CD4-positive, alpha-beta memory T cell (primary cell): ENCODE measurements at regions of chr5 and their contacts with region 1.

Region 1: GRCh38 chr5:142769741-142770631 is at the start of gene ARHGAP26:
- DNase-seq: peak; percentile 87 to 91 (median 88)
- H3K4me3 ChIP-seq: peak within 1 kb of the TSS; percentile 74 to 89
- H3K4me3 Mint-ChIP-seq: peak within 1 kb of the TSS; percentile 94 to 98 (median 96)
- H3K27ac ChIP-seq: peak within 1 kb of the TSS; percentile 53
- H3K27ac Mint-ChIP-seq: peak within 1 kb of the TSS; percentile 85 to 97 (median 94)
- H3K4me1 ChIP-seq: peaks cover 14% of the 10 kb centered on the region
- H3K4me1 Mint-ChIP-seq: peaks cover 18 to 38% (median 26%) of the 10 kb centered on the region in 4 donors
- H3K27me3 ChIP-seq: no peaks in the 10 kb centered on the region
- H3K27me3 Mint-ChIP-seq: no peaks in the 10 kb centered on the region
- total RNA-seq, gene ARHGAP26: 22.6 to 22.7 TPM

Region 2: DNA sequence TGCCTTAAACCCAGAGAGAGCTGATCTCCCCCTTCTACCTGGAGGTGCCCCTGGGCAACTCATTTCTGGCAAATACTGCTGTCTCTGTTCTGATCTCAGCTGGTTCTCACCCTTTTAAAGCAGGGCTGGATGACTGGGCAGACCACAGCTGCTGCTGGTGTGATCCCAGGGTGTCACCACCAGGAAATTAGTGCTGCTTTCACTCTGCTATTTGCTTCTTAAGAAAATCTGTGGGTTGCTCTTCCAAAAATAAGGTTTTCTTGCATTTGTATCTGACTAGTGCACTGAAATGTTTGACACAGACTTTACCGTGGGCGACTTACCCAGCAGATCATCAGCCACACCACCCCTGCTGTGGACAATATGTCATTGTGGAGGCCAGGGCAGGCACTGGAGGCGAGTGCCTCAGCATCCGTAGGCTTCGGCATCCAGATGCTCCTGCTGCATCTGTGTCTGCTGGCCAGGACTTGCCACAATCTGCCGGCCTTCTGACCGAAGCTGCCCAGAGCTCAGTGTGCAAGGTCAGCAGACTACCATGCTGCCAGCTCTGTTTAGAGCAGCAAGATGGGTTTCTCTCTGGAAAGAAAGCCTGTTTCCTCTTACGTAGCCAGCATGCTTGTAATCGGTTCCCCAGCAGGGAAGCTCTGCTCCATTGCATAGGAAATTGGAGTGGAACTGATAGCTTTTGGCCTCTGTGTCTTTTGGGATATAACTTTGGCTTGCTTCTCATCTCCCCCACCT is 13.8 kb after region 1 on chr5:
- CTCF ChIA-PET with region 1: interaction called, 30 read pairs
- POLR2A ChIA-PET with region 1: interaction called, 35 read pairs
- intact Hi-C with region 1: no loop called
- DNase-seq: peak in 2 of 5 donors; percentile 17 to 43
- H3K4me3 ChIP-seq: peak overlapping the region in 1 of 2 donors; percentile 31
- H3K4me3 Mint-ChIP-seq: peak overlapping the region in 7 of 8 donors; percentile 70 to 90 (median 78)
- H3K27ac ChIP-seq: no peak overlapping the region
- H3K27ac Mint-ChIP-seq: peak overlapping the region in 5 of 7 donors; percentile 43 to 77 (median 70)
- H3K4me1 ChIP-seq: peaks cover 28% of the 10 kb centered on the region
- H3K4me1 Mint-ChIP-seq: peaks cover 29 to 68% (median 50%) of the 10 kb centered on the region in 4 donors
- H3K27me3 ChIP-seq: no peaks in the 10 kb centered on the region
- H3K27me3 Mint-ChIP-seq: no peaks in the 10 kb centered on the region

Region 3: GRCh38 chr5:142800776-142801494 is 30.9 kb after region 1 on chr5:
- CTCF ChIA-PET with region 1: interaction called, 34 read pairs
- POLR2A ChIA-PET with region 1: interaction called, 23 read pairs
- intact Hi-C with region 1: loop called (anchors 2 kb)
- DNase-seq: peak; percentile 47 to 58 (median 54)
- H3K4me3 ChIP-seq: no peak overlapping the region
- H3K4me3 Mint-ChIP-seq: peak overlapping the region; percentile 27 to 83 (median 74)
- H3K27ac ChIP-seq: peak overlapping the region; percentile 6
- H3K27ac Mint-ChIP-seq: peak overlapping the region; percentile 71 to 96 (median 93)
- H3K4me1 ChIP-seq: peaks cover 51% of the 10 kb centered on the region
- H3K4me1 Mint-ChIP-seq: peaks cover 36 to 64% (median 50%) of the 10 kb centered on the region in 4 donors
- H3K27me3 ChIP-seq: no peaks in the 10 kb centered on the region
- H3K27me3 Mint-ChIP-seq: no peaks in the 10 kb centered on the region

Region 4: DNA sequence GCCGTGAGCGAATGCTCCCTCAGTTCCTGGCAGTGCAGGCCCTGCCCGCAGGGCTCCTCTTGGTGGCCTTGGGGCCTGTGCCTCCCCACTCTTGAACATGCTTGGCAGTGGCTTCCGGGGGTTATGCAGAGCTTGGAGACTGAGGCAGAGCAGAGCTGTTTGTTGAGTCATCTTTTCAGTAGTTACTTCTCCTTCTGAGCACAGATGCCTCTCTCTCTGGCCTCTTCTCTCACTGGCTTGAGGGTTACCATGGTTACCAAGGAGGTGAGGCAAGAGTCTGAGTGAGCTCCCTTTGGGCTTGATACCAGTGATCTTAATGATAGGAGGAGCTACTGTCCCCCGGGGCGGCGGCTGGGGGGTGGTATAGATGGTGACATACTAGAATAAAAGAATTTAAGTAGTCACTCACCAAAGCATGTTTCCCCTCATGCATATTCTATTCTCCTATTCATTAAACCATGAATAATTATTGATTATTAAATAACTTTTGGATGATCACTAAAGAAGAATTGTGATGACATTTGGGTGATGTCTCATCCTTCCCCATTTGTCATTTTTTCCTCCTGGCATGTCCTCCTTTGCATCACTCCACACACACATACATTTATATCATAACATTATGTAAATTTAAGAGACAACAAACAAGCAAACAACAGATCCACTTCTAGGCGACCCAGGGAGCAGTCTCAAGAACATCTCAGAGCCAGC is 111.2 kb after region 1 on chr5:
- CTCF ChIA-PET with region 1: interaction called, 17 read pairs
- POLR2A ChIA-PET with region 1: interaction called, 4 read pairs
- intact Hi-C with region 1: no loop called
- DNase-seq: no peak
- H3K4me3 ChIP-seq: no peak overlapping the region
- H3K4me3 Mint-ChIP-seq: no peak overlapping the region
- H3K27ac ChIP-seq: no peak overlapping the region
- H3K27ac Mint-ChIP-seq: peak overlapping the region in 1 of 7 donors; percentile 25
- H3K4me1 ChIP-seq: no peaks in the 10 kb centered on the region
- H3K4me1 Mint-ChIP-seq: peaks cover 0 to 3% (median 1%) of the 10 kb centered on the region in 4 donors
- H3K27me3 ChIP-seq: no peaks in the 10 kb centered on the region
- H3K27me3 Mint-ChIP-seq: no peaks in the 10 kb centered on the region

Region 5: DNA sequence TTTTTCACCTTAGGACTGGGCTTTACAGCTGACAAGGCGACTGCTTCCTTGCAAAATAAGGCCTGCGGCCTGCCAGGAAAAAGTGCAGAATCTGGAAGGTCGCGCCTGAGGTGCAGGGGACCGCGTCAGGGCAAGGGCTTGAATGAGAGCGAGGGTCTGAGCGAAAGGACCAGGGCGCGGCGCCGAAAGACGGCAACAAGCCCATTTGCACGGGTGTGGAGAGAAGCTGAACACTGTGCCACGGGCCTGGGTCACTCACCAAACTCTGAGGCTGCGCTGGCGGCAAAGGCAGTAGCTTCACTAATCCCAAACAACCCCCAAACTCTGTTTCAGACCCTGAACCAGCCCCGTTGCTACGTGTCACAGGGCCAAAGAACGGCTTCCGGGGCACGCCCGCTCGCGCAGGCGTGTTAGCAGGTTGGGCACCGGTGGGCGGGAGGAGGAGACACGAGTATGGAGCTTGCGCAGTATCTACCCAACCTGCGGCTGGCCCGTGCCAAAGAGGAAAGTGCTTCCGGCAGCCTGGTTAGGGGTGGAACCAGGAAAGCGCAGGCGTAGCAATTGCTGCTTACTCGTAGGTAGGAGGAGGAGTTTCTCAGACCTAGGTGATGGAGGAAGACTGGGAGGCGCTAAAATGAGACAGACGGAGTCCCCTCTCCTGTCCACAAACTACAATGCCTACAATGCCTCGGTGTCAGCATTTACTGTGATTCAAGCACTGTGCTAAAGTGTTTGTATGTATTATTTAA is 1400.5 kb after region 1 on chr5 and contains the starts of genes KCTD16 and YIPF5:
- CTCF ChIA-PET with region 1: no interaction called
- POLR2A ChIA-PET with region 1: interaction called, 3 read pairs
- intact Hi-C with region 1: loop called (anchors 1 kb)
- DNase-seq: peak; percentile 96 to 99 (median 98)
- H3K4me3 ChIP-seq: peak within 1 kb of the TSS; percentile 66 to 97
- H3K4me3 Mint-ChIP-seq: peak within 1 kb of the TSS; percentile 84 to 98 (median 93)
- H3K27ac ChIP-seq: peak within 1 kb of the TSS; percentile 92
- H3K27ac Mint-ChIP-seq: peak within 1 kb of the TSS; percentile 90 to 99 (median 94)
- H3K4me1 ChIP-seq: peaks cover 44% of the 10 kb centered on the region
- H3K4me1 Mint-ChIP-seq: peaks cover 27 to 50% (median 45%) of the 10 kb centered on the region in 4 donors
- H3K27me3 ChIP-seq: no peaks in the 10 kb centered on the region
- H3K27me3 Mint-ChIP-seq: no peaks in the 10 kb centered on the region
- total RNA-seq, gene KCTD16: 0.14 to 0.20 TPM
- total RNA-seq, gene YIPF5: 50.5 to 56.3 TPM